A549 (cell line): ENCODE measurements at regions of chr12 and their contacts with region 1.

Region 1: DNA sequence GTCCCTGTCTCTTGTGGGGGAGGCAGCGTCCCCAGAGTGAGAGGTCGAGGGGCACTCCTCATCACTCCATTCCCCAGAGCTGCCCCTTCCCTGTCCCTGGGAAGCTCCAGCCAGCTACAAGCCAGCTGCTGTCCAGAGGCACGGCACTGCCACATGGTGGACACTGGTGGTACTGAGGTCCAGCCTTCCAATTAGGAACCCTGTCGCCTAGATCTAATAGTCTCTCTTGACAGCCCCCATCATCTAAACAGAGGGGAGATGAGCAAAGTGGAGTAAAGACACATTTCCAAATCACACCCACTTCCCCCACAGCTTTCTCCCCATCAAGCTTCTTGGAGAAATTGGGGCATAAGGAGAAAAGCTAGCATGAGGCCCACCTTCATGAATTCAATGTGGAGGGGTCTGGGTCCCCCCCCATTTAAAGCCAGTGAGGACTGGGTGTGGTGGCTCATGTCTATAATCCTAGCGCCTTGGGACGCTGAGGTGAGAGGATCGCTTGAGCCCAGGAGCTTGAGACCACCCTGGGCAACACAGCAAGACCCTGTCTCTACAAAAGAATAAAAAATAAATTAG is 2.1 kb upstream of the INHBE start:
- DNase-seq: peak; percentile 65 to 84
- ATAC-seq: peak; percentile 54 to 74
- H3K4me3 ChIP-seq: no peak overlapping the region
- H3K27ac ChIP-seq: peak overlapping the region; percentile 92 to 99
- H3K4me1 ChIP-seq: peaks cover 68% of the 10 kb centered on the region
- CTCF ChIP-seq: peak; percentile 94
- EP300 ChIP-seq: no peak
- POLR2A ChIP-seq: no peak
- RAD21 ChIP-seq: peak; percentile 98 to 99

Region 2: DNA sequence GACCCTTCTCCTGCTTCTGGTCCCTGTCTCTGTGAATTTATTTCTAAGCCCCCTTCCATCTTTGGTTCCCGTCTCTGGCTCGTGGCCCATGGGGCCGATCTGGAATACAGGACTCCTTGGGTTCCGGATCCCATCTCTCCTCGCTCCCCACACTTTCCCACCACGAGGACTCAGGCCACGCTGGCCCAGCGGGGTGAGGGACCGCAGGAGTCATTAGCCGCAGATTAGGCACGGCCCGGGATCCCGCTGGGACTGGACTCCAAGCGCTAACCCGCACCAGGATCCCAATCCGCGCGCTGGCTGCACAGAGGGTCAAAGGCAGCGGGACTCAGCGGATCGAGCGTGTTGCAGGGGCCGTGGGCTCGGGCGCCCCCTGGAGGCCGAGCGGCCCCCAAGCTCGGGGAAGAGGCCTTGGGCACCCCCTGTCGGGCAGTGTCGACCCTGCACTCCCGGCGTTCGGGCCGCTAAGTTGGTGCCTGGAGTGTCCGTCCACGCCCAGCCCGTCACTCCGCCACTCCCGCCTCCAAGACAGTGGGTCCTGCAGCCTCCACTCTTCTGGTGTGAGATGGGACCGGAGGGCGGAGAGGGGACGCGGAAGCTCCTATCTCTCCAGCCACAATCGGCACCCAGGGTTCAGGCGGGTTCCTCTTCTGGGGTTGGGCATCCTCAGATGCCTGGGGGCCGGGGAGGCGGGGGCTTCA is 214.0 kb before region 1 on chr12:
- CTCF ChIA-PET with region 1: interaction called, 98 read pairs
- POLR2A ChIA-PET with region 1: no interaction called
- DNase-seq: peak; percentile 88 to 92
- ATAC-seq: peak; percentile 49 to 73
- H3K4me3 ChIP-seq: peak overlapping the region; percentile 55
- H3K27ac ChIP-seq: peak overlapping the region; percentile 75 to 93
- H3K4me1 ChIP-seq: peaks cover 26% of the 10 kb centered on the region; the same call in 2 of the 3 replicates
- CTCF ChIP-seq: peak; percentile 100
- EP300 ChIP-seq: no peak
- POLR2A ChIP-seq: no peak
- RAD21 ChIP-seq: peak; percentile 79 to 88

Region 3: GRCh38 chr12:57299514-57300016 is 153.5 kb before region 1 on chr12:
- CTCF ChIA-PET with region 1: interaction called, 459 read pairs
- POLR2A ChIA-PET with region 1: no interaction called
- DNase-seq: no peak
- ATAC-seq: no peak
- H3K4me3 ChIP-seq: no peak overlapping the region
- H3K27ac ChIP-seq: no peak overlapping the region
- H3K4me1 ChIP-seq: no peaks in the 10 kb centered on the region
- CTCF ChIP-seq: no peak
- EP300 ChIP-seq: no peak
- POLR2A ChIP-seq: no peak
- RAD21 ChIP-seq: no peak

Region 4: DNA sequence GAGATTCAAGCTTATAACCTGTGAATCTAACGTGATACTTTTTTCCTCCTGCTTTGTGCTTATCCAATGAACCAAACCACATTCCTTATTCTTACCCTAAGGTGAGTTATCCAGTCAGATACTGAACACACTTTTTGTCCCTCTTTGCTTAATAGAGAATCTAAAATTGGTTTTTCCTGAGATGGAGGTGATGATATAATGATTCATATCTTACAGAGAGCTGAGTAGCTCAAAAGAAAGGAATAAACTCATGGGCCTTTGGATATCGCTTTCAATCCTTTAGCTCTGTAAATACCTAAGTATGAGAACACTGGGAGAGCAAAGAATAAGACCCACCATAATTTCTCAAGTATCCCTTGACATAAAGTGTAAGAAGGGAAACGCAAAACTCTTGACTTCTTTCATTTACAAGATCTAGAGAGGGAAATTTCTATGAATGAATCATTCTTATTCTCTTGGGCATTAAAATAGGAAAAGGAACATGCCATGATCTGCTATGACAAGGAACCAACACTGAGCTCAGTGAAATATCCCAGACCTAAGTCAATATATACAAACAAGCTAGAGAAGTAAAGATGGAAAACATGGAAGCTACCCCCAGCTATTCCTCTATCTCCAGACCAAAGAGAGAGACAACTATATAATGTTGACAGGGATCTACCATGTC is 120.2 kb before region 1 on chr12:
- CTCF ChIA-PET with region 1: interaction called, 35 read pairs
- POLR2A ChIA-PET with region 1: no interaction called
- DNase-seq: no peak
- ATAC-seq: peak in 1 of 2 experiments; percentile 21; a peak in 1 of 6 replicates
- H3K4me3 ChIP-seq: no peak overlapping the region
- H3K27ac ChIP-seq: no peak overlapping the region
- H3K4me1 ChIP-seq: peaks cover 5% of the 10 kb centered on the region; the same call in 2 of the 3 replicates
- CTCF ChIP-seq: no peak
- EP300 ChIP-seq: no peak
- POLR2A ChIP-seq: no peak
- RAD21 ChIP-seq: no peak

Region 5: GRCh38 chr12:57368349-57369095 is 84.5 kb before region 1 on chr12:
- CTCF ChIA-PET with region 1: interaction called, 18 read pairs
- POLR2A ChIA-PET with region 1: no interaction called
- DNase-seq: peak; percentile 70 to 97
- ATAC-seq: peak; percentile 92 to 95
- H3K4me3 ChIP-seq: peak overlapping the region; percentile 20; the same call in 2 of the 3 replicates
- H3K27ac ChIP-seq: peak overlapping the region; percentile 79 to 89
- H3K4me1 ChIP-seq: peaks cover 61% of the 10 kb centered on the region
- CTCF ChIP-seq: no peak
- EP300 ChIP-seq: peak; percentile 39 to 77; a peak in 2 of 5 replicates
- POLR2A ChIP-seq: no peak
- RAD21 ChIP-seq: peak in 1 of 2 experiments; percentile 46; a peak in 4 of 5 replicates

Region 6: DNA sequence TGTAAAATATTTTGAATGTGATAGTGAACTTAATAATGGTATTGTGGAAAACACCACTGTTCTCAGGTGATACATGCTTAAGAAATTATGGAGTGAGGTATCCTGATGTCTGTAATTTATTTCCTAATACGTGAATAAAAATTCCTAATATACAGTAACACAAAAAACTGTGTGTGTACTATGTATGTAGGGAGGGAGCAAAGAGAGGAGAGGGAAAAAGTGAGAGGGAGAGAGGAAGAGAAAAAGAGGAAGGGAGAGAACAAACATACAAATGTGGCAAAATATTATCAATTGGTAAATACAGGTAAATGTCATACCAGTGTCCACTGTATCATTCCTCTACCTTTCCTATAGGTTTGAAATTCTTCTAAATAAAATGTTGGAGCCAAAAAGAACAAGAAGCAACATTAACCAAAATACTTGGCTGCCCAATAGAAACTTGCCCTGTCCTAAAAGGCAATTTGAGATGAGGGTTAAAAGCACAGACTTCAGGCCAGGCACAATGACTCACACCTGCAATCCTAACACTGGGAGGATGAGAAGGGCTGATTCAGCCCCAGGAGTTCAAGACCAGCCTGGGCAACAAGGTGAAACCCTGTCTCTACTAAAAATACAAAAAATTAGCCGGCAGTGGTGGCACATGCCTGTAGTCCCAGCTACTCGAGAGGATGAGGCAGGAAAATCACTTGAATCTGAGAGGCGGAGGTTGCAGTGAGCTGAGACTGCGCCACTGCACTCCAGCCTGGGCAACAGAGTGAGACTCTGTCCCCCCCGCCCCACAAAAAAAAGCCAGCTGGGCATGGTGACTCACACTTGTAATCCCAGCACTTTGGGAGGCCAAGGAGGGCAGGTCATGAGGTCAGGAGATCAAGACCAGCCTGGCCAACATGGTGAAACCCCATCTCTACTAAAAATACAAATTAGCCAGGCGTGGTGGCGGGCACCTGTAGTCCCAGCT is 36.7 kb before region 1 on chr12:
- CTCF ChIA-PET with region 1: interaction called, 21 read pairs
- POLR2A ChIA-PET with region 1: no interaction called
- DNase-seq: peak in 1 of 2 experiments; percentile 30
- ATAC-seq: peak in 1 of 2 experiments; percentile 76; a peak in 3 of 6 replicates
- H3K4me3 ChIP-seq: no peak overlapping the region
- H3K27ac ChIP-seq: peak overlapping the region in 1 of 2 experiments; percentile 74; a peak in 3 of 6 replicates
- H3K4me1 ChIP-seq: peaks cover 15% of the 10 kb centered on the region
- CTCF ChIP-seq: no peak
- EP300 ChIP-seq: no peak
- POLR2A ChIP-seq: no peak
- RAD21 ChIP-seq: no peak

Region 7: DNA sequence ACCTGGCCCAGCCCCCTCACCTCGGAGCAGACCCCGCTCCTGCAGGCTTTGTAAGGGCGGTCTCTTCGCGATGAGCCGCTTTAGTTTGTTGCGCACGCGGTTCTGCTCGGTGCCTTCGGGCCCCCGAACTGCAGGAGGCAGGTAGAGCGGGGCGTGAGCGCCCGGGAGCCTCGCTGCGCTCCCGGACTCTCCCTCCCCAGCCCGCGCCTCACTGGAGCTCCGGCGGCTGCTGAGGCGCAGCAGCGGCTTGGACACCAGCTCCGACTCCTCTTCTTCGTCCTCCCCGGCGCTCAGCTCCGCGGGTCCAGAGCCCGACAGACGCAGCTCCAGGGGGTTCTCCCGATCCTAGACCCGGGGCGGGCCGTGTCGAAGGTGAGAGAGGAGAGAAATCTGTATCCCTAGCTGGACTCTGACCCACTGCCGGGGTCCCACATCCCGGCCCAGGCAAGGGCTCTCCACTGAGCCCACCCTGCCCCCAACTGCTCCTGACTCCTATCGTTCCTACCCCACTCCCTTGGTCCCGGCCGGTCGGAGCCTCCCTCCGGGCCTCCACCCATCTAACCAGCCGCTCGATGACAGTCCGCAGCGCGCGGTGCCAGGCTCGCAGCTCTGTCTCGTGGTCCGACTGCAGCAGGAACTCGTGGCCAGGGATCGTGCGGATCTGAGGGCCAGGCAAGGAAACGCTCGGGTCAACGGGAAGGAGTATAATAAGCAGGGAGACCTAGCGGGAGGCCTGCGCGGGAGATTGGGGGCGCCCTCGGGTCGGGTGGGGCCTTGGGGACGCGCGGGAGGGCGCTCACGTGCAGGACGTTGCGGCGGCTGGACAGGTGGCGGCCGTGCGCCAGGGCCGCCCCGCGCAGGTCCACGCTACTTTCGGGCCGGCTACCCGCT is 22.5 kb after region 1 on chr12:
- CTCF ChIA-PET with region 1: interaction called, 240 read pairs
- POLR2A ChIA-PET with region 1: no interaction called
- DNase-seq: no peak
- ATAC-seq: no peak
- H3K4me3 ChIP-seq: no peak overlapping the region
- H3K27ac ChIP-seq: no peak overlapping the region
- H3K4me1 ChIP-seq: peaks cover 14% of the 10 kb centered on the region; the same call in 2 of the 3 replicates
- CTCF ChIP-seq: no peak
- EP300 ChIP-seq: no peak
- POLR2A ChIP-seq: no peak
- RAD21 ChIP-seq: no peak

Region 8: GRCh38 chr12:57525615-57526400 is 72.8 kb after region 1 on chr12:
- CTCF ChIA-PET with region 1: no interaction called
- POLR2A ChIA-PET with region 1: no interaction called
- DNase-seq: no peak
- ATAC-seq: no peak
- H3K4me3 ChIP-seq: no peak overlapping the region
- H3K27ac ChIP-seq: peak overlapping the region in 1 of 2 experiments; percentile 42; a peak in 1 of 6 replicates
- H3K4me1 ChIP-seq: peaks cover 35% of the 10 kb centered on the region
- CTCF ChIP-seq: no peak
- EP300 ChIP-seq: no peak
- POLR2A ChIP-seq: no peak
- RAD21 ChIP-seq: no peak